Mammary epithelial cell (primary cell): ENCODE measurements at regions of chr3 and their contacts with region 1.

Region 1: GRCh38 chr3:9715764-9716437 is 12.3 kb downstream of the CPNE9 start:
- DNase-seq: peak; percentile 76
- H3K4me3 ChIP-seq: no peak overlapping the region
- H3K27ac ChIP-seq: no peak overlapping the region
- H3K4me1 ChIP-seq: no peaks in the 10 kb centered on the region
- H3K27me3 ChIP-seq: no peaks in the 10 kb centered on the region
- CTCF ChIP-seq: peak; percentile 96 to 99

Region 2: GRCh38 chr3:9422712-9423424 is 293.0 kb before region 1 on chr3:
- CTCF ChIA-PET with region 1: no interaction called
- dilution Hi-C with region 1: no loop called
- in situ Hi-C with region 1: no loop called
- intact Hi-C with region 1: no loop called
- DNase-seq: peak; percentile 98
- H3K4me3 ChIP-seq: peak overlapping the region; percentile 7 to 50 (median 26)
- H3K27ac ChIP-seq: peak overlapping the region; percentile 93
- H3K4me1 ChIP-seq: peaks cover 49% of the 10 kb centered on the region
- H3K27me3 ChIP-seq: no peaks in the 10 kb centered on the region
- CTCF ChIP-seq: peak; percentile 69 to 74

Region 3: GRCh38 chr3:9503283-9503682 is 212.6 kb before region 1 on chr3:
- CTCF ChIA-PET with region 1: no interaction called
- dilution Hi-C with region 1: no loop called
- in situ Hi-C with region 1: no loop called
- intact Hi-C with region 1: loop called (anchors 2 kb)
- DNase-seq: peak; percentile 39
- H3K4me3 ChIP-seq: no peak overlapping the region
- H3K27ac ChIP-seq: no peak overlapping the region
- H3K4me1 ChIP-seq: peaks cover 21% of the 10 kb centered on the region
- H3K27me3 ChIP-seq: no peaks in the 10 kb centered on the region
- CTCF ChIP-seq: peak; percentile 92 to 97

Region 4: GRCh38 chr3:9792405-9793160 is 76.7 kb after region 1 on chr3 and contains the starts of genes ARPC4 and TADA3:
- CTCF ChIA-PET with region 1: no interaction called
- dilution Hi-C with region 1: no loop called
- in situ Hi-C with region 1: no loop called
- intact Hi-C with region 1: loop called (anchors 5 kb)
- DNase-seq: peak; percentile 93
- H3K4me3 ChIP-seq: peak within 1 kb of the TSS; percentile 73 to 80 (median 76)
- H3K27ac ChIP-seq: peak within 1 kb of the TSS; percentile 95
- H3K4me1 ChIP-seq: peaks cover 16% of the 10 kb centered on the region
- H3K27me3 ChIP-seq: no peaks in the 10 kb centered on the region
- CTCF ChIP-seq: no peak
- total RNA-seq, gene ARPC4: 135 to 202 TPM
- total RNA-seq, gene TADA3: 57.5 to 75.5 TPM

Region 5: GRCh38 chr3:9932843-9933560 is 217.1 kb after region 1 on chr3:
- CTCF ChIA-PET with region 1: interaction called, 3 read pairs
- dilution Hi-C with region 1: no loop called
- in situ Hi-C with region 1: no loop called
- intact Hi-C with region 1: loop called (anchors 5 kb)
- DNase-seq: peak; percentile 64
- H3K4me3 ChIP-seq: peak overlapping the region; percentile 66 to 91 (median 79)
- H3K27ac ChIP-seq: no peak overlapping the region
- H3K4me1 ChIP-seq: peaks cover 20% of the 10 kb centered on the region
- H3K27me3 ChIP-seq: no peaks in the 10 kb centered on the region
- CTCF ChIP-seq: peak; percentile 36 to 85

Region 6: GRCh38 chr3:10224784-10225665 is 509.1 kb after region 1 on chr3:
- CTCF ChIA-PET with region 1: no interaction called
- dilution Hi-C with region 1: no loop called
- in situ Hi-C with region 1: no loop called
- intact Hi-C with region 1: loop called (anchors 10 kb)
- DNase-seq: peak; percentile 64
- H3K4me3 ChIP-seq: no peak overlapping the region
- H3K27ac ChIP-seq: no peak overlapping the region
- H3K4me1 ChIP-seq: peaks cover 20% of the 10 kb centered on the region
- H3K27me3 ChIP-seq: no peaks in the 10 kb centered on the region
- CTCF ChIP-seq: peak; percentile 84 to 85

Region 7: DNA sequence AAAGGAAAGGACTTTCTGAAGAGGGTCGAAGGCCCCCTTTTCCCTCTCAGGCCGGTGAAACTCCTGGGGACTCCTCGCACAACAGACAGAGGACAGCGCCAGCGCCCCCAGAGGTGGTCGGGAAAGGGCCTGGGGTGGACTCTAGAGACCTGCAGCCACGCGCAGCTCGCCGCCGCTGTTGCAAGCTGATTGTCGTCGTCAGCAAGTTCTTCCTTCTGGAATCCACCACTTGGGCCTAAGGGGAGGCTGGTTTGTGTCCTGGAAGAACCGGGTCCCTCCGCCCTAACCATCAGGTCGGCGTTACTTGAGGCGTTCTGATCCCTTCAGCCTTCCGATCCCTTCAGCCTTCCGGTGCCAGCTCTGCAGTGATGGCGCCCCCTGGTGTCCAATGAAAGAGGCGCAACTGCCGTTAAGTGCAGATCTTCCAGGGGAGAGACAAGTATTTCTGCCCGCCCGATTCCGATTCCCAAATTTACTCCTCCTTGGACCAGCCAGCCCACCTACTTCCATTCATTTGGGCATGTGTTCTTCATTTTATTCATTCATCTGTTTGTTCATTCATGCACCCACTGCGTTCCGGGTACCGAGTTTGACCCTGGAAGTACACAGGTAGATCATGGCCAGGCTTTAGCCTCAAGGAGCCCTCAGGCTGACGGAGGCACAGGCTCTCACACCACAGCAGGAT is 1022.9 kb after region 1 on chr3:
- CTCF ChIA-PET with region 1: no interaction called
- dilution Hi-C with region 1: no loop called
- in situ Hi-C with region 1: no loop called
- intact Hi-C with region 1: loop called (anchors 10 kb)
- DNase-seq: peak; percentile 51
- H3K4me3 ChIP-seq: no peak overlapping the region
- H3K27ac ChIP-seq: no peak overlapping the region
- H3K4me1 ChIP-seq: no peaks in the 10 kb centered on the region
- H3K27me3 ChIP-seq: peaks cover 6% of the 10 kb centered on the region
- CTCF ChIP-seq: peak; percentile 91 to 94